Right cardiac atrium (tissue), 5 donors: ENCODE measurements at regions of chr4 and their contacts with region 1.

Region 1: DNA sequence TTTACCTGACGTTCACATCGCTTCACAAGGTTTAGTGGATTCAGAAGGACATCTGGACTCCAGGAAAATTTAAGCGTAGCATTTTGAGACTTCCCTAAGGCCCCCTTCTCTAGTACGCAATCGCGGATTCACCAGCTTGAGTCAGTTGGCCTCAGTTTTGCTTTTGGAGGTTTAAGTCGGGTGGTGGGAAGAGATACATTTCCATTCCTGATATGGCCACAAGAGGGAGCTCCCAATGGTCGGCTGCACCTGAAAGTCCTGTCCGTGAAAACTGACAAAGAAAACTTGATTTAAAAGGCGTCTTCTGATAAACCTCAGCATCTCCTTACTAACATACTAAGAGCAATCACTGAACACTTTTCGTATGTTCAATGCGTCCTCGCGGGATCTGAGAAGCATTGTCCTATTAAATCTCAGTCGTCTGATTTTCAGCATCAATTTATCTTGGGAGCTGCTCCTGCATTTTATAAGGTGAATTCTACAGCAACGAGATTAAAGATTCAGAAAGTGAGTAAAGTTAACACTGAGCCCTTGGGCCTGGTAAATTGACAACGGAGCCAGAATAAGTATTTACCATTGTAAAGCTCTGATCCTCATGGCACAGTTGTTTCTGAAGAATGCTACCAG is 50.6 kb downstream of the LGI2 start:
- DNase-seq: peak in 1 of 3 donors; percentile 44
- ATAC-seq: peak; percentile 57 to 73
- H3K4me3 ChIP-seq: peak overlapping the region; percentile 45
- H3K27ac ChIP-seq: peak overlapping the region; percentile 95
- H3K4me1 ChIP-seq: no peaks in the 10 kb centered on the region
- H3K27me3 ChIP-seq: no peaks in the 10 kb centered on the region

Region 2: GRCh38 chr4:25030277-25031076 is 50.3 kb after region 1 on chr4 and contains the start of gene LGI2:
- intact Hi-C with region 1: no loop called
- DNase-seq: peak; percentile 56 to 85 (median 85)
- ATAC-seq: peak; percentile 80 to 85
- H3K4me3 ChIP-seq: peak within 1 kb of the TSS; percentile 97
- H3K27ac ChIP-seq: peak within 1 kb of the TSS; percentile 42
- H3K4me1 ChIP-seq: no peaks in the 10 kb centered on the region
- H3K27me3 ChIP-seq: no peaks in the 10 kb centered on the region
- total RNA-seq, gene LGI2: 5.2 to 7.1 (median 6.0) TPM

Region 3: DNA sequence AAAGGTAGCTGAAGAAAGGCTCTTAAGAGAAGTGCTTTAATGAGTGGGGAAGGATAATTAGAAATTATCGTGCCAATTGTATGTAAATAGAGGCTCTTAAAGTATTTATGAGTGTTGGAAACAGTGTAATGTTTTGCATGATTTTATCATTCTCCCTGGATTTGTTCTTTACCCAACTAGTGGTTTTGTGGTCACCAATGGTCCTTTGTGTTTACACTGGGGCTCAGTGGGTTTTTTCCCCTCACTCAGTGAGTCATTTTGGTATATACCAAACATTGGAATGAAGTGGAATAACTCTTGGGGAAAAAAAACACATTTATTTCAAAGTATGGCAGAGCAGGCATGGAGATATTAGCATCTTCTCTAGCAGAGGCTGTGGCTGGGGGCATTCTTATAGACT is 71.4 kb after region 1 on chr4:
- intact Hi-C with region 1: loop called in 1 of 4 experiments (anchors 10 kb)
- DNase-seq: no peak
- ATAC-seq: no peak
- H3K4me3 ChIP-seq: no peak overlapping the region
- H3K27ac ChIP-seq: no peak overlapping the region
- H3K4me1 ChIP-seq: no peaks in the 10 kb centered on the region
- H3K27me3 ChIP-seq: no peaks in the 10 kb centered on the region

Region 4: DNA sequence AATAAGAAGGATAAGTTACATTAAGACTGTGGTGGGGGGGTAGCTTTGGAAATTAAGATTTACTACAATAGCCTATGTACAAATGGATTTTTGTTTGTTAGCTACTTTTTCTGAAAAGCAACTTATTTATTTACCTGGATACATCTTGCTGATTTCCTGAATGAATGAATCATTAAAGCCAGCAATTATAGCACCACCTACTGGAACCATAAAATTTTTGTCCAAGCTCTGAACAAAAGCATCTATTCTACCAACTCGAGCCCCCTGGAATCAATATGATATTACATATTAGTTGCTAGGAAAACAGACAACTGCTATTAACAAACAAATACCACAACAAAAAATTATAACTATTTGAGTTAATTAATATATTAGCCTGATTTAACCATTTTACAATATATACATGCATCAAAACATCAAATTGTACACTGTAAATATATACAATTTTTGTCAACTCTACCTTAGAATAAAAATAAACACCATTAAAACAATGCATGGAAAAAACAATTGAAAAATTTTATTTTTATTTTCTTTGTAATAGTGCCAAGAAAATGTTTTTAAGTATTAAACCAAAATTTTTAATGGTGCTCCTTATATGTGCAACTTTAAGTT is 164.8 kb after region 1 on chr4:
- intact Hi-C with region 1: loop called (anchors 2 to 10 kb)
- DNase-seq: no peak
- ATAC-seq: no peak
- H3K4me3 ChIP-seq: no peak overlapping the region
- H3K27ac ChIP-seq: no peak overlapping the region
- H3K4me1 ChIP-seq: no peaks in the 10 kb centered on the region
- H3K27me3 ChIP-seq: no peaks in the 10 kb centered on the region

Region 5: GRCh38 chr4:25223802-25224375 is 243.7 kb after region 1 on chr4:
- intact Hi-C with region 1: no loop called
- DNase-seq: no peak
- ATAC-seq: no peak
- H3K4me3 ChIP-seq: no peak overlapping the region
- H3K27ac ChIP-seq: no peak overlapping the region
- H3K4me1 ChIP-seq: no peaks in the 10 kb centered on the region
- H3K27me3 ChIP-seq: no peaks in the 10 kb centered on the region

Region 6: DNA sequence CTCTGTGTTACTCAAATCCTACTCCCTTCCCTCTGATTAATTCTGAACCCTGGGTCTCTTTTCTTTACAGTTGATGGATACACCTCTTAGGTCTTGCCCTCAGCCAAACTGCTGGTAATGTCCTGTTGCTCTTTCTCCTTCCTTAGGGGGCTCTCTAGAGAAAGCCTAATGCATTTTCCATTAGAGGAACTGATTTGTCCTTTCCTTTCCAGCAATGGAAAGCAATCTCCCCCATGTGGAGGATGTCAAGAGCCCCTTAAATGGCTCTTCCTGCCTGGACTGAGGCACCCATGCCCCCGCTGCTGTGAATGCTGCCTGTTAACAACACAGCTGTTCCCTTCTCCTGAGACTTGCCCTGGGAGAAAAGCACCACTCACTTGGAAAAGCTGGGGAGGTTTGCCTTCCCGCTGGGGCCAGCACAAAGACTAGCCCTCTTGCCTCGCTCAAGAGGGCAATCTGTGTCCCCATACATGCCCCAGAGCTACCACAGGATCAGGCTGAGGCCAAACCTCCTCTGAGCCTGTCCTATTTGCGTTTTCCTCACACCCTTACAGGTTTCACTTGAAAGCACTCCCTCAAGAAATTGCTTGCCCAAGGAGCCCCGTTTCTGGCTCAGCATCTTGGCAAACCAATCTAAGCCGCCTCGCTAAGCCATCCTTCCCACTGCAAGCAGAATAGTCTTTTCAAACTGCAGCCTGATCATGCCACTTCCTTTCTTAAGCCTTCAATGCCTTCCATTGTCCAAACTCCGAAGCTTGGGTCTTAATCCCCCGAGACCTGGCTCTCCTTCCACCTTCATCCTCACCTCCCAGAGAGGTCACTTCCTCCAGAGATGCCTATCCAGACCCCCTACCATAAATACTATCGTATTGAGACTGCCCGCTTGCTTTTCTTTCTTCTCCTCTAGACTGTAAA is 910.7 kb after region 1 on chr4:
- intact Hi-C with region 1: no loop called
- DNase-seq: no peak
- ATAC-seq: no peak
- H3K4me3 ChIP-seq: no peak overlapping the region
- H3K27ac ChIP-seq: no peak overlapping the region
- H3K4me1 ChIP-seq: no peaks in the 10 kb centered on the region
- H3K27me3 ChIP-seq: no peaks in the 10 kb centered on the region